PC-3 (cell line): ENCODE measurements at regions of chr17 and their contacts with region 1.

Region 1: GRCh38 chr17:82551779-82552457 is 32.4 kb downstream of the FOXK2 start:
- DNase-seq: peak; percentile 77
- ATAC-seq: peak; percentile 91
- H3K4me3 ChIP-seq: no peak overlapping the region
- H3K27ac ChIP-seq: no peak overlapping the region
- H3K4me1 ChIP-seq: peaks cover 13% of the 10 kb centered on the region
- H3K27me3 ChIP-seq: no peaks in the 10 kb centered on the region
- CTCF ChIP-seq: peak; percentile 84

Region 2: DNA sequence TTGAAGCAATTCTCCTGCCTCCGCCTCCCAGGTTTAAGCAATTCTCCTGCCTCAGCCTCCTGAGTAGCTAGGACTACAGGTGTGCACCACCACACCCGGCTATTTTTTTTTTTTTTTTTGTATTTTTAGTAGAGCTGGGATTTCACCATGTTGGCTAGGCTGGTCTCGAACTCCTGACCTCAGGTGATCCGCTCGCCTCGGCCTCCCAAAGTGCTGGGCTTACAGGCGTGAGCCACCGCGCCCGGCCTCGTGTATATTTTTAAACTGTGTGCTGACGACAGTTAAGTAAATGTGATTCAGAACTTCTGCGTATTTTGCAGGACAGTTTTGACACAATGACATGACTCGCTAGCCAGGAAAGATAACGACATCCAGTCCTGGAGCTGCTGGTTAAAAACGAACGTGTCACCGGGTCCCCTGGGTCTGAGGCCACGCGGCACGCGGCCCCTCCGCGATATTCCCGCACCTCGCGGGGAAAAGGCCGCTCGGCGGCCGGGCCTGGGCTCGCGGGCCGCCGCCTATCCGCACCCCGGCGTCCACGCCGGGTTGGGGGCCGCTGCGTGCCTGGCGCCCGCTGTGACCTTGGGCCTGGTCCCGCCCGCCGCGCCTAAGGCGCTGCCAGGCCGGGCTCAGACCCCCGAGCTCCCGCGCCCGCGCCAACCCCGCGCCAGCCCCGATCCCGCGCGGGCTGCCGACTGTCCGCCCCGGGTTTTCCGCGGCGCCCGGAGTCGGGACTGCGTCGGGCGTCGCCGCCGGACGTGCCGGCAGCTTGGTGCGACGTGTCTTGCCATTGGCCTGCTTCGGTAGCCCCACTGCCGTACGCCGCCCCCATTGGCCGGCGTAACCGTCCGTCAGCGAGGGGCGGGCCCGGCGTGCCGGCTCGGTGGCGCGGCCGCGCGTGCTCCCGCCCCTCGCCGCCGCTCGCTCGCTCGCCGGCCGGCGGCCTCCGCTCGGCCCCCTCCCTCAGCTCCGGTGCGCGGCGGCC is 32.8 kb before region 1 on chr17 and contains the start of gene FOXK2:
- CTCF ChIA-PET with region 1: interaction called, 18 read pairs
- POLR2A ChIA-PET with region 1: no interaction called
- intact Hi-C with region 1: no loop called
- DNase-seq: peak; percentile 97
- ATAC-seq: peak; percentile 96
- H3K4me3 ChIP-seq: peak within 1 kb of the TSS; percentile 78
- H3K27ac ChIP-seq: peak within 1 kb of the TSS; percentile 71
- H3K4me1 ChIP-seq: peaks cover 12% of the 10 kb centered on the region; the same call in 1 of the 2 replicates
- H3K27me3 ChIP-seq: no peaks in the 10 kb centered on the region
- CTCF ChIP-seq: no peak
- total RNA-seq, gene FOXK2: 60.5 and 71.0 TPM in 2 replicates

Region 3: DNA sequence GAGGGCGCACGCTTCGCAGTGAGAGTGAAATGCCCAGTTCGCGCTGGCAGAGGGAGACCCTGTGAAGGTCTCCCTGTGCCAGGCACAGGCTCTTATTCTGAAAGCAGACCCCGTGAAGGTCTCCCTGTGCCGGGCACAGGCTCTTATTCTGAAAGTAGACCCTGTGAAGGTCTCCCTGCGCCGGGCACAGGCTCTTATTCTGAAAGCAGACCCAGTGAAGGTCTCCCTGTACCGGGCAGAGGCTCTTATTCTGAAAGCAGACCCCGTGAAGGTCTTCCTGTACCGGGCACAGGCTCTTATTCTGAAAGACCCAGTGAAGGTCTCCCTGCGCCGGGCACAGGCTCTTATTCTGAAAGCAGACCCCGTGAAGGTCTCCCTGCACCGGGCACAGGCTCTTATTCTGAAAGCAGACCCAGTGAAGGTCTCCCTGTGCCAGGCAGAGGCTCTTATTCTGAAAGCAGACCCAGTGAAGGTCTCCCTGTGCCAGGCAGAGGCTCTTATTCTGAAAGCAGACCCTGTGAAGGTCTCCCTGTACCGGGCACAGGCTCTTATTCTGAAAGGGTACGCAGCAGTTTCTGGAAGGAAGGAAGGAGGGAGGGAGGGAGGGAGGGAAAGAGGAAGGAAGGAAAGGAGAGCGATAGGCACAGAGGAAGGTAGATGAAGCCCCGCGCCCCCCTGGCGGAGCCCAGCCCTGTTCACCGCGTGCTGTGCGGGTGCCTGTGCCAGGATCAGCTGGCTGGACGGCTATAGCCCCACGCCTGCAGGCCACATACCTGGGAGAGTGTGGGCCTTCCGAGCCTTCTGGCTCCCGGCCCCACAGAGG is 41.1 kb after region 1 on chr17:
- CTCF ChIA-PET with region 1: no interaction called
- POLR2A ChIA-PET with region 1: no interaction called
- intact Hi-C with region 1: no loop called
- DNase-seq: peak; percentile 83
- ATAC-seq: peak; percentile 55
- H3K4me3 ChIP-seq: peak overlapping the region; percentile 63
- H3K27ac ChIP-seq: peak overlapping the region; percentile 50
- H3K4me1 ChIP-seq: peaks cover 15% of the 10 kb centered on the region
- H3K27me3 ChIP-seq: no peaks in the 10 kb centered on the region
- CTCF ChIP-seq: no peak

Region 4: GRCh38 chr17:82668631-82669099 is 116.7 kb after region 1 on chr17:
- CTCF ChIA-PET with region 1: no interaction called
- POLR2A ChIA-PET with region 1: no interaction called
- intact Hi-C with region 1: no loop called
- DNase-seq: peak; percentile 73
- ATAC-seq: peak; percentile 100
- H3K4me3 ChIP-seq: peak overlapping the region; percentile 6; the same call in 1 of the 2 replicates
- H3K27ac ChIP-seq: no peak overlapping the region
- H3K4me1 ChIP-seq: no peaks in the 10 kb centered on the region
- H3K27me3 ChIP-seq: no peaks in the 10 kb centered on the region
- CTCF ChIP-seq: peak; percentile 75